OCI-LY7 (cell line): ENCODE measurements at regions of chr4 and their contacts with region 1.

Region 1: DNA sequence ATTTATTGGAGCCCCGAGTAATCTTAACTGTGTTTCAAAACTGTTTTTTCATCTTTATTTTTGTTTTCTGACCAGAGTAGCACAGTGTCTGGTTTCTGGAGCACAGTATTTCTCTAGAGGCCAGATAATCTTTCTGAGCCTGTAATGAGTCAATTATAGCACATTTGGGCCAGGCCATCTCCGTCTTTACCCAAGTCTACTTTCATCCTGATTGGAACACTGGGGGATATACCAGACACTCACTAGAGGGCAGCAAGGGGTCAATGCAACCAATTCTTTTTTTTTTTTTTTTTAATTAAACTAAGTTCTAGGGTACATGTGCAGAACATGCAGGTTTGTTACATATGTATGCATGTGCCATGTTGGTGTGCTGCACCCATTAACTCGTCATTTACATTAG is 282.0 kb downstream of the ARHGAP24 start:
- DNase-seq: peak; percentile 68
- H3K4me3 ChIP-seq: no peak overlapping the region
- H3K27ac ChIP-seq: no peak overlapping the region
- H3K4me1 ChIP-seq: no peaks in the 10 kb centered on the region
- CTCF ChIP-seq: peak; percentile 73

Region 2: GRCh38 chr4:85968945-85969819 is 212.2 kb after region 1 on chr4:
- CTCF ChIA-PET with region 1: no interaction called
- POLR2A ChIA-PET with region 1: no interaction called
- intact Hi-C with region 1: loop called (anchors 5 kb)
- DNase-seq: peak; percentile 49
- H3K4me3 ChIP-seq: no peak overlapping the region
- H3K27ac ChIP-seq: no peak overlapping the region
- H3K4me1 ChIP-seq: no peaks in the 10 kb centered on the region
- CTCF ChIP-seq: peak; percentile 85